AG04450 (cell line): ENCODE measurements at regions of chr6 and their contacts with region 1.

Region 1: DNA sequence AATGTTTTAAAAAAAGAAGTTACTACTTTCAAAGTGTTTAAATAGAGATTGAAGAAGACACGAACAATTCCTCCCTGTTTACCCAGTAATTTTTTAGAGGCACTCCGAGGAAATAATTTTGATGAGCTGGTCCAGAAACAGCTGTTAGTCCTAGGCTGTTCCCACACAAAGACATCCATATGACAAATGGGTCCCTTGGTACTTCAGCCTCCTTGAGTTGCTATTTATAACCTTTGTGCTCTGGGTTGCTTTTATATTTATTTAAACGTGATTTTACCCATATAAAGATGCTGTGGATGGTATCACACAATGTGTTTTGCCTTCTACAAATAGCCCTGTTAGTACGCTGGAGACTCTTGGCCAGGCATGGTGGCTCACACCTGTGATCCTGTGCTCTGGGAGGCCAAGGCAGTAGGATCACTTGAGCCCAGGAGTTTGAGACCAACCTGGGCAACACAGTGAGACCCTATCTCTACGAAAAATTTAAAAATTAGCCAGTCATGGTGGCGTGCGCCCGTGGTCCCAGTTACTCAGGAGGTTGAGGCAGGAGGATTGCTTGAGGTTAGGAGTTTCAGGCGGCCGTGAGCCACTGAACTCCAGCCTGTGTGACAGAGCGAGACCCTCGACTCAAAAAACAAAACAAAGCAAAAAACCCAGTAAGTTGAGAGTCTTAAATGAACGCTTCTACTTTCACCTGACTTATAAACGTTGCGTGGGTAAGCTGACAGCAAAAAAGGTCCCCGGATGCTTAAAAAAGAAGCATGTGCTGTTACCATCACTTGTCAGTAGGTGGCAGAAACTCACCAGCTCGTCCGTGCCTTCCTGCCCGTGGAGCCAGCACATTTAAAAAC is 56.9 kb upstream of the ARMH2 start:
- DNase-seq: peak; percentile 59
- H3K4me3 ChIP-seq: no peak overlapping the region
- H3K27ac ChIP-seq: no peak overlapping the region
- H3K27me3 ChIP-seq: no peaks in the 10 kb centered on the region
- CTCF ChIP-seq: peak; percentile 95

Region 2: GRCh38 chr6:24844903-24845302 is 10.7 kb before region 1 on chr6:
- CTCF ChIA-PET with region 1: interaction called, 10 read pairs
- POLR2A ChIA-PET with region 1: no interaction called
- DNase-seq: no peak
- H3K4me3 ChIP-seq: no peak overlapping the region
- H3K27ac ChIP-seq: no peak overlapping the region
- H3K27me3 ChIP-seq: peaks cover 3% of the 10 kb centered on the region
- CTCF ChIP-seq: no peak

Region 3: GRCh38 chr6:24883618-24884017 is 28.0 kb after region 1 on chr6:
- CTCF ChIA-PET with region 1: interaction called, 14 read pairs
- POLR2A ChIA-PET with region 1: no interaction called
- DNase-seq: peak; percentile 80
- H3K4me3 ChIP-seq: 0 out of 2 replicates have a peak overlapping the region, but pooled peaks have one; percentile 18
- H3K27ac ChIP-seq: peak overlapping the region; percentile 62
- H3K27me3 ChIP-seq: no peaks in the 10 kb centered on the region
- CTCF ChIP-seq: no peak

Region 4: DNA sequence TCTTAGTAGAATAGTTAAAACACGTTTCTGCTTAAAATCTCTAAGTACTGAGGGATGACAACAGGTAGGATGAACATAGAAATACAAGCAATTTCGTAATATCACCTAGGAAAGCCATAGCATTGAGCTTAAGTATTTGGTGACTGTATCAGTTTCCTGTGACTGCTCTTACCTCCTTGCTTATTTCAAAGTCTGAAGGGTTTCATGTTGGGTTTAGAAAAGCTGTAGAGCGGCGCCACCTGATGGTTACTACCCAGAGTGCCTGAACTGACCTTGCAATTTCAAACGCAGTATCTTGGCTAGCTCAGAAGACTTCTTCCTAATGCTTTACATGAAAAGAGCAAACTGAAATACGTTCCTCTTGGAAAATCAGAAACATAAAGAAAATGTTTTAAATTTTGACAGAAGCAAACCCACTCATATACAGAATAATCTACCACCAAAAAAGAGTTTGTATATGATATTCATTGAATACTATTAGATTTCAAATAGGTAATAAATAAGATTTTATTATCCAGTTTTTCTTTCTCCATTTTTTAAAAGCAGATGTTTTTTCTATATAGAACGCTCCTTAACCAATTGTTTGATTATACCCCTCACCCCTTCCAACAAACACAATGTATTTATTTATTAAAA is 162.4 kb after region 1 on chr6:
- CTCF ChIA-PET with region 1: interaction called, 13 read pairs
- POLR2A ChIA-PET with region 1: no interaction called
- DNase-seq: no peak
- H3K4me3 ChIP-seq: no peak overlapping the region
- H3K27ac ChIP-seq: no peak overlapping the region
- H3K27me3 ChIP-seq: no peaks in the 10 kb centered on the region
- CTCF ChIP-seq: peak; percentile 57

Region 5: DNA sequence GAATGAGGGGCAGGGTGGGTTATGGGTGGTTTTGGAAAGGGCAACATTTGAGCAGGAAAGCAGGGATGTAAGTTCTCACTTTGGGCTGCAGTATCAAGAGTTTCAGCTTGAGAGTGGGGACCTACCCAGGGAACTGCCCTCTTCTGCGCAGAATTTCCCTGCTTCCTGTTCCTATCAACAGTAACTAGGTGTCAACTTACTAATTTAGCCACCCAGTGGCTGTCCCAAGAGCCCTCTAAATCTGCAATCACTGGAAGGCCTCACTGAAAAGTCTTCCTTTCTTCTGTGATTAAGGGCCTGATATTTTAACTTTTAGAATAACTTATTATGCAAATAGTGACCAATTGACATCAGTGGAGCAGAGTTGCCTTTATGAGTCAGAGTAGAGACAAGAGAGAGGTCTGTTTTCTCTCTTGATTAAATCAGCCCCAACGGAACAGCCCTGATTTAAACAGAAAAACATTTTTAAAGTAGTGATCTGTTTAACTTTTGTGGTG is 198.3 kb after region 1 on chr6:
- CTCF ChIA-PET with region 1: interaction called, 15 read pairs
- POLR2A ChIA-PET with region 1: no interaction called
- DNase-seq: peak; percentile 59
- H3K4me3 ChIP-seq: no peak overlapping the region
- H3K27ac ChIP-seq: peak overlapping the region; percentile 92
- H3K27me3 ChIP-seq: no peaks in the 10 kb centered on the region
- CTCF ChIP-seq: 0 out of 2 replicates have a peak, but pooled peaks have one; percentile 5